ENCODE measurements at regions of chr4 and their contacts with region 1.

Region 1: GRCh38 chr4:22607382-22607781 is 85.4 kb upstream of the GBA3 start:
- DNase-seq: peak in 3 of 5 donors; percentile 22 to 38 (median 28)
- H3K4me3 ChIP-seq: no peak overlapping the region
- H3K27ac ChIP-seq: no peak overlapping the region
- H3K4me1 ChIP-seq: no peaks in the 10 kb centered on the region
- H3K27me3 ChIP-seq: no peaks in the 10 kb centered on the region
- CTCF ChIP-seq: no peak
- EP300 ChIP-seq: no peak
- POLR2A ChIP-seq: no peak

Region 2: DNA sequence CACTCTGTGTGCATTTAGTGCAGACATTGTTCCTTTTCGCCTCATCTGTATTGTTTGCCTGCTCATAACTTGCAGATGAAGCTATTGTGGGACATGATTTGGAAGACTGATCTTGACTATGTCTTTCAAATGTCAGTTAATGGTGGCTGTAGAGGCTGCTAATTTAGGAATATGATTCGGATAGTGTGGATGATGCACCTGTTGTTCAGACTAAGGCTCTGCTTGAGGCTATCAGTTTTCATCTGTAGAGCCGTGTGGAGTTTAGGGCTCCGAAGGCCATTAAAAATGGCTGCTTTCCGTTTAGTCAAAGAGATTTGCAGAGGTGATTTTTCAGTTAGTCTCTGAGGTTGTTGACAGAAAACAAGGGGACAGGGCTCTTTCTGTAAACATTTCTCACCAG is 187.3 kb after region 1 on chr4:
- intact Hi-C with region 1: loop called in 1 of 4 experiments (anchors 5 kb)
- DNase-seq: no peak
- H3K4me3 ChIP-seq: no peak overlapping the region
- H3K27ac ChIP-seq: no peak overlapping the region
- H3K4me1 ChIP-seq: no peaks in the 10 kb centered on the region
- H3K27me3 ChIP-seq: no peaks in the 10 kb centered on the region
- CTCF ChIP-seq: no peak
- EP300 ChIP-seq: no peak
- POLR2A ChIP-seq: no peak